PC-9 (cell line): ENCODE measurements at regions of chr6 and their contacts with region 1.

Region 1: GRCh38 chr6:39114704-39115599 is at the start of gene SAYSD1:
- DNase-seq: peak; percentile 76 to 85
- H3K4me3 ChIP-seq: peak within 1 kb of the TSS; percentile 72
- H3K27ac ChIP-seq: peak within 1 kb of the TSS; percentile 76
- H3K4me1 ChIP-seq: peaks cover 18% of the 10 kb centered on the region
- H3K27me3 ChIP-seq: peaks cover 5% of the 10 kb centered on the region; the same call in 1 of the 2 replicates
- CTCF ChIP-seq: no peak
- total RNA-seq, gene SAYSD1: 12.2 and 12.6 TPM in 2 replicates

Region 2: GRCh38 chr6:41072676-41073623 is 1958.0 kb after region 1 on chr6 and contains the start of gene NFYA:
- CTCF ChIA-PET with region 1: no interaction called
- POLR2A ChIA-PET with region 1: no interaction called
- intact Hi-C with region 1: loop called (anchors 5 kb)
- DNase-seq: peak; percentile 95 to 99
- H3K4me3 ChIP-seq: peak within 1 kb of the TSS; percentile 82
- H3K27ac ChIP-seq: peak within 1 kb of the TSS; percentile 96
- H3K4me1 ChIP-seq: peaks cover 32% of the 10 kb centered on the region
- H3K27me3 ChIP-seq: no peaks in the 10 kb centered on the region
- CTCF ChIP-seq: no peak
- total RNA-seq, gene NFYA: 27.3 and 31.9 TPM in 2 replicates